Activated T-helper 1 cell treated with anti-CD3 and anti-CD28 coated beads, Interleukin-12 subunit alpha, Interleukin-12 subunit beta, Interleukin-2, Interleukin-4 antibody, amounts not matched to agents 30 ng/mL and 10 ng/mL and 1 ng/mL, durations not matched to agents 14 hours and 24 hours and 36 hours (primary cell): ENCODE measurements at regions of chr19 and their contacts with region 1.

Region 1: DNA sequence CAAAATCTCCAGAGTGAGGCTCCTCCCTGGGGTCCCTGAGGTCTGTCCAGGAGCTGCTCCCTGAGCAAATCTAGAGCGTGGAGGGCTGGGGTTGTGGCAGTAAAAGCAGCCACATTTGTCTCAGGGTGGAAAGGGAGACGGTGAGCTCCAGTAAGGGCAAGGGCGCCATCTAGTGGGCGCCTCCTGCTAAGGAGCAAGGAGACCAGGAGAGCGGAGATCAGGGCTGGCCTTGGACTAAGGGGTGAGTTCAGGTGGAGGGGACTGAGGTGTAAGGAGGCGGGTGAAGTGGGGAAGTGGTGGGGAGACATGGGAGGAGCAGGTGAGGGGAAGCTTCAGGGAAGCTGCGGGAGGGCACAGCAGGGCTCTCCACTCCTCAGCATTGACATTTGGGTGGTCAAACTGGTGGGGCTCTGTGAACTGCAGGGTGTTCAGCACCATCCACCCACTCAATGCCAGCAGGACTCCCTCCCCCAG is 5.3 kb upstream of the CEACAM21 start:
- DNase-seq: peak; percentile 76
- H3K4me3 Mint-ChIP-seq: no peak overlapping the region
- H3K27ac Mint-ChIP-seq: peak overlapping the region; percentile 27
- H3K4me1 Mint-ChIP-seq: peaks cover 27% of the 10 kb centered on the region
- H3K27me3 Mint-ChIP-seq: no peaks in the 10 kb centered on the region

Region 2: DNA sequence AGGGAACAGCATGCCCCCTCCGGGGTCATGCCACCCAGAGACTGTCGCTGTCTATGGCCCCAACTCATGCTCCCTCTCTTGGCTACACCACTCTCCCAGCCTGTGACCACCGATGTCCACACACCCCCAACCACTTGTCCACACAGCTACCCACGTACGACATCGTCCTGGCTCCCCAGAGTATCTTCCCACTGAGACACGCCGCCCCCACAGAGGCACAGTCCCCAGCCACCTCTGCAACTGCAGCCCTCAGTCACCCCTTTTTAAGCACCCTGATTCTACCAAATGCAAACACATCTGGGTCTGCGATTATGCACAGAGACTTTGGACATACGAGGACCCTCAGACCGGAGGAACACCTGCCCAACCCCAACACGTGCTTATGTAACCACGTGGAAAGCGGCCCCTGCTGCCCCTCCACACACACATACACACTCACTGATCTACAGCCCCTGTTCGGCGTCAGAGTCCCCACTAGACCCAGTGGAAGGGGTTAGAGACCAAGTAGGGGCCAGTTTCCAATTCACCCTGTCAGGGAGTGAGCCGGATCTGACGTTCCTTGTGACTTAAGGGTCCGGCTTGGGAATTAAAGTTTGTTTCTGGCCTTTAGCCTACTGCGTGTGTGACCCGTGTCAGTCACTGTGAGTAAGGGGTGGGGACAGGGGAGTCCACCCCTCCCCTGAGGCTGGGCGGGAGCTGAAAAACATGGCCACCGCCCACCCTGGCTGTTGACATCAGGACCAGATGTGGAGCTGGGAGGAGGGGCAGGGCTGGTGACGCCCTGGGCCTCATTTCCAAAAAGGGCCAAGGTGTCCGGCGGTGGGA is 363.5 kb before region 1 on chr19:
- intact Hi-C with region 1: loop called (anchors 1 kb)
- DNase-seq: no peak
- H3K4me3 Mint-ChIP-seq: no peak overlapping the region
- H3K27ac Mint-ChIP-seq: no peak overlapping the region
- H3K4me1 Mint-ChIP-seq: peaks cover 18% of the 10 kb centered on the region
- H3K27me3 Mint-ChIP-seq: no peaks in the 10 kb centered on the region

Region 3: GRCh38 chr19:41449079-41449864 is 121.4 kb before region 1 on chr19:
- intact Hi-C with region 1: loop called (anchors 1 kb)
- DNase-seq: peak; percentile 60
- H3K4me3 Mint-ChIP-seq: peak overlapping the region; percentile 81
- H3K27ac Mint-ChIP-seq: no peak overlapping the region
- H3K4me1 Mint-ChIP-seq: peaks cover 15% of the 10 kb centered on the region
- H3K27me3 Mint-ChIP-seq: peaks cover 14% of the 10 kb centered on the region

Region 4: GRCh38 chr19:41515015-41515652 is 55.5 kb before region 1 on chr19:
- intact Hi-C with region 1: loop called (anchors 1 kb)
- DNase-seq: no peak
- H3K4me3 Mint-ChIP-seq: no peak overlapping the region
- H3K27ac Mint-ChIP-seq: no peak overlapping the region
- H3K4me1 Mint-ChIP-seq: peaks cover 15% of the 10 kb centered on the region
- H3K27me3 Mint-ChIP-seq: peaks cover 17% of the 10 kb centered on the region